ENCODE measurements at regions of chr11 and their contacts with region 1.

Region 1: GRCh38 chr11:121655537-121656327 is 203.0 kb upstream of the SORL1-AS1 start:
- DNase-seq: peak; percentile 79
- ATAC-seq: peak; percentile 84
- H3K4me3 ChIP-seq: peak overlapping the region; percentile 46 to 92 (median 58)
- H3K4me3 Mint-ChIP-seq: peak overlapping the region; percentile 89
- H3K27ac ChIP-seq: peak overlapping the region in 1 of 2 donors; percentile 23
- H3K27ac Mint-ChIP-seq: peak overlapping the region; percentile 3
- H3K4me1 ChIP-seq: peaks cover 6 to 10% of the 10 kb centered on the region in 2 donors
- H3K4me1 Mint-ChIP-seq: peaks cover 8% of the 10 kb centered on the region
- H3K27me3 ChIP-seq: peaks cover 0 to 8% (median 4%) of the 10 kb centered on the region in 4 experiments
- H3K27me3 Mint-ChIP-seq: peaks cover 10% of the 10 kb centered on the region
- CTCF ChIP-seq: peak; percentile 66

Region 2: GRCh38 chr11:121643535-121644512 is 11.9 kb before region 1 on chr11:
- CTCF ChIA-PET with region 1: interaction called, 16 read pairs
- POLR2A ChIA-PET with region 1: no interaction called
- intact Hi-C with region 1: no loop called
- DNase-seq: no peak
- ATAC-seq: no peak
- H3K4me3 ChIP-seq: no peak overlapping the region
- H3K4me3 Mint-ChIP-seq: no peak overlapping the region
- H3K27ac ChIP-seq: no peak overlapping the region
- H3K27ac Mint-ChIP-seq: no peak overlapping the region
- H3K4me1 ChIP-seq: no peaks in the 10 kb centered on the region
- H3K4me1 Mint-ChIP-seq: no peaks in the 10 kb centered on the region
- H3K27me3 ChIP-seq: no peaks in the 10 kb centered on the region
- H3K27me3 Mint-ChIP-seq: peaks cover 4% of the 10 kb centered on the region
- CTCF ChIP-seq: no peak

Region 3: GRCh38 chr11:122202951-122203456 is 547.3 kb after region 1 on chr11:
- CTCF ChIA-PET with region 1: interaction called, 29 read pairs
- POLR2A ChIA-PET with region 1: no interaction called
- intact Hi-C with region 1: no loop called
- DNase-seq: peak; percentile 49
- ATAC-seq: peak; percentile 57
- H3K4me3 ChIP-seq: no peak overlapping the region
- H3K4me3 Mint-ChIP-seq: no peak overlapping the region
- H3K27ac ChIP-seq: no peak overlapping the region
- H3K27ac Mint-ChIP-seq: no peak overlapping the region
- H3K4me1 ChIP-seq: no peaks in the 10 kb centered on the region
- H3K4me1 Mint-ChIP-seq: no peaks in the 10 kb centered on the region
- H3K27me3 ChIP-seq: peaks cover 0 to 7% (median 2%) of the 10 kb centered on the region in 4 experiments
- H3K27me3 Mint-ChIP-seq: peaks cover 35% of the 10 kb centered on the region
- CTCF ChIP-seq: peak; percentile 81

Region 4: DNA sequence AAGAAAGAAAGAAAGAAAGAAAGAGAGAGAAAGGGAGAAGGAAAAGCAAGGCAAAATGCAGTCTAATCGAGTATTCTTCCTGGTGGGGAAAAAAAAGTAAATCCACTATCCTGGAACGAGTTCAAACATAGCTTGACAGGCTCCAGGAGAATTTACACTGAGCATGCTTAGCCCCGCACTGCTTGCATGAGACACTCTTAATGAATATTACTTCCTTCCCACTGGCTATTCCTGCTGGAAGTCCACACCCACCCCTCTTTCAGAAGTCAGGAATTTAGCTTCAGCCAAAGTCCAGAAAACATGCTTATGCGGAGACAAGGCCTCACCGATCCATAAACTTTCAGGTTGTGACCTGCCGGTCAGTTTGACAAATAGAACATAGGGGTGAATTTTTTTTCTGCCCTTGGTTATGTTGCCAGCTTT is 712.1 kb after region 1 on chr11:
- CTCF ChIA-PET with region 1: no interaction called
- POLR2A ChIA-PET with region 1: no interaction called
- intact Hi-C with region 1: no loop called
- DNase-seq: no peak
- ATAC-seq: no peak
- H3K4me3 ChIP-seq: no peak overlapping the region
- H3K4me3 Mint-ChIP-seq: no peak overlapping the region
- H3K27ac ChIP-seq: no peak overlapping the region
- H3K27ac Mint-ChIP-seq: no peak overlapping the region
- H3K4me1 ChIP-seq: no peaks in the 10 kb centered on the region
- H3K4me1 Mint-ChIP-seq: no peaks in the 10 kb centered on the region
- H3K27me3 ChIP-seq: no peaks in the 10 kb centered on the region
- H3K27me3 Mint-ChIP-seq: peaks cover 2% of the 10 kb centered on the region
- CTCF ChIP-seq: no peak

Region 5: DNA sequence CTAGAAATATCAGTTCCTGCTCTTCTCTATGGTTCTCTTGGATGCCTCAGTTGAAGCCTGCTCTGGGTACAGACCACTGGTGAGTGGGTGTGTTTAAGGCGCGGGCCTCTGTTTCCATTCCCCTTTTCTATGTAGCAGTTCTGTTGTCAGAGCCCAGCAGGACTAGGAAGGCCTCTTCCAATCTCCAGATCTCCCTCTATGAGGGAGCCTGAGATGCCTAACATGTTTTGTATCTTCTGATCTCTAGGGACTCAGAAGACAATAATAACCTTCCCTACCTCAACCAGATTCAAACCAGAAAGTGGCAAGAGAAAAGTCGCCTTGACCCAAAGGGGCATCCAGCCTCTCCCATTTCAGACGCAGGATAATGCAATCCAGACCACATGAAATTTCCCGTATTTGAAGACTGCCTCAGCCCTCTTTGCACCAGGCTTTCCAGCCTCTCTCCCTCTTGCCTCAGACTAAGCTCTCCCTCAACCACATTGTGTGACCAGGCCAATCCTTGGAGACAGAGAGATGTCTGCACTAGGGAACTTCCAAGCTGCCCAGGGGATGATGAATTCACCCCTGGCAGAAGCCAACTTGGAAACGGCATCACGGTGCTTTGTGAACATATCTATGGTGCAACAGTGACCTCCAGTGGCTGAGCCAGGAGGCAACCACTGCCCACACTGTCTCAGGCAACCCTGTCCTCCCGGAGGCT is 849.7 kb after region 1 on chr11:
- CTCF ChIA-PET with region 1: interaction called, 15 read pairs
- POLR2A ChIA-PET with region 1: no interaction called
- intact Hi-C with region 1: no loop called
- DNase-seq: peak; percentile 31
- ATAC-seq: no peak
- H3K4me3 ChIP-seq: no peak overlapping the region
- H3K4me3 Mint-ChIP-seq: no peak overlapping the region
- H3K27ac ChIP-seq: no peak overlapping the region
- H3K27ac Mint-ChIP-seq: no peak overlapping the region
- H3K4me1 ChIP-seq: no peaks in the 10 kb centered on the region
- H3K4me1 Mint-ChIP-seq: no peaks in the 10 kb centered on the region
- H3K27me3 ChIP-seq: peaks cover 0 to 6% (median 3%) of the 10 kb centered on the region in 4 experiments
- H3K27me3 Mint-ChIP-seq: peaks cover 42% of the 10 kb centered on the region
- CTCF ChIP-seq: peak; percentile 52

Measured in B cell (primary cell).